A673 (cell line): ENCODE measurements at regions of chr2 and their contacts with region 1.

Region 1: DNA sequence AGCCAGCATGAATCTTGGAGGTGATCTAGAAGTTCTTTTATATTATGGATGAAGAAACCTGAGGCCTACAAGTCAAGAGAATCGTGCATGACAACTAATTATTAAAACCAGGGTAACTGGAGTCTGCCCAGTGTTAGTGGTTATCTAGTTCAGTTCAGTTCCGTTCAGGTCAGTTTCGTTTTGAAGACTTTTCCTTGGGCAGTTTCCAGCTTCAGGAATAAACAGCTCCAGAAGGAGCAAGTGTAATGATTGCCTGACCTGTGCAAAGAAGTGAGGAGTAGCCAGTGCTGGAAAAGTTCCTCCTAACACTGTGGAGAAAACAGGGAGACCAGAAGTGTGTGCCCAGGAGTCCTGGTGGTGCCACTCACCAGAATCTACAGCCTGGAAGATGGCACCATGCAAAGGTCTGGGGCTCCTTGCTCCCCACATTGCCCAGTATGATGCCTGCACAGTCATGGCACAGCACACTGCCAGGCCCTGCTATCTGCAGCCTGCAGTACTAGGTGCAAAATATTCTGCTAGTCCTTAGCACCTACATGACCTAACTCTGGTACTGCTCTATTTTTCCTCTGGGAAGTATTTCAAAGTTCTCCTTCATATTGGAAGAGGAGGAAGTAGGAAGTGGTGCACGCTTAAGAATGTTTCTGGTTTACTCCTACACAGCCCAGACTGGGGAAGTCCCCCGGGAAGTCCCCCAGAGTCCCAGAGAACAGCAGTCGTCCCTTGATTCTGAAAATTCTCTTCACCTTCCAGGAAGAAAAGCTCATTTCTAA is 65.8 kb downstream of the SUMO1 start:
- DNase-seq: no peak
- H3K4me3 ChIP-seq: no peak overlapping the region
- H3K27ac ChIP-seq: no peak overlapping the region
- H3K4me1 ChIP-seq: peaks cover 7% of the 10 kb centered on the region
- H3K27me3 ChIP-seq: no peaks in the 10 kb centered on the region
- CTCF ChIP-seq: no peak

Region 2: GRCh38 chr2:202104278-202104870 is 68.3 kb before region 1 on chr2:
- CTCF ChIA-PET with region 1: no interaction called
- POLR2A ChIA-PET with region 1: no interaction called
- intact Hi-C with region 1: loop called (anchors 5 kb)
- DNase-seq: peak; percentile 76
- H3K4me3 ChIP-seq: no peak overlapping the region
- H3K27ac ChIP-seq: no peak overlapping the region
- H3K4me1 ChIP-seq: peaks cover 24% of the 10 kb centered on the region
- H3K27me3 ChIP-seq: no peaks in the 10 kb centered on the region
- CTCF ChIP-seq: peak; percentile 79